Naive thymus-derived CD4-positive, alpha-beta T cell (primary cell): ENCODE measurements at regions of chr9 and their contacts with region 1.

Region 1: GRCh38 chr9:29078063-29078660 is 1504.9 kb upstream of the C9orf72 start:
- DNase-seq: no peak
- ATAC-seq: no peak
- H3K4me3 ChIP-seq: no peak overlapping the region
- H3K4me3 Mint-ChIP-seq: no peak overlapping the region
- H3K27ac ChIP-seq: no peak overlapping the region
- H3K27ac Mint-ChIP-seq: no peak overlapping the region
- H3K4me1 ChIP-seq: no peaks in the 10 kb centered on the region
- H3K4me1 Mint-ChIP-seq: no peaks in the 10 kb centered on the region
- H3K27me3 ChIP-seq: no peaks in the 10 kb centered on the region
- H3K27me3 Mint-ChIP-seq: no peaks in the 10 kb centered on the region

Region 2: DNA sequence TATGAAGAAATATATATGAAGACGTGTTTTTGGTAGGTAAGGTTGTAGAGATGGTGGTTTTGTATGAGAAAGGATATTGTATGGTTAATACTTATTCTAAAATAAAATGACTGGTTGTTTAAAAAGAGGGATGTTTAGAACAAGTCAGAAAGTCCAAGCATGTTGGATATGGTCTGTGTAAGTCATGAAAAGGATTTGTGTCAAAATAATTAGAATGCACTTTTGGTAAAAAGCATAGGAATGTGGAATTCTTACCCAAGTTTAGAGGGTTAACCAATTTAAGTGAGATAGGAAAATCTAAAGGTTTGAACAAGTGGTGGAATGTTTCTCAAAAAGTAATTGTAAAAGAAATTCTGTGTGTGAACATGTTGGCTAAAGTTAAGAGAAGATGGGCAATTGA is 51.6 kb after region 1 on chr9:
- CTCF ChIA-PET with region 1: no interaction called
- POLR2A ChIA-PET with region 1: no interaction called
- intact Hi-C with region 1: loop called in 1 of 2 experiments (anchors 10 kb)
- DNase-seq: no peak
- ATAC-seq: no peak
- H3K4me3 ChIP-seq: no peak overlapping the region
- H3K4me3 Mint-ChIP-seq: no peak overlapping the region
- H3K27ac ChIP-seq: no peak overlapping the region
- H3K27ac Mint-ChIP-seq: no peak overlapping the region
- H3K4me1 ChIP-seq: no peaks in the 10 kb centered on the region
- H3K4me1 Mint-ChIP-seq: no peaks in the 10 kb centered on the region
- H3K27me3 ChIP-seq: no peaks in the 10 kb centered on the region
- H3K27me3 Mint-ChIP-seq: no peaks in the 10 kb centered on the region